Head of caudate nucleus (tissue), 42 donors: ENCODE measurements at regions of chr3 and their contacts with region 1.

Region 1: DNA sequence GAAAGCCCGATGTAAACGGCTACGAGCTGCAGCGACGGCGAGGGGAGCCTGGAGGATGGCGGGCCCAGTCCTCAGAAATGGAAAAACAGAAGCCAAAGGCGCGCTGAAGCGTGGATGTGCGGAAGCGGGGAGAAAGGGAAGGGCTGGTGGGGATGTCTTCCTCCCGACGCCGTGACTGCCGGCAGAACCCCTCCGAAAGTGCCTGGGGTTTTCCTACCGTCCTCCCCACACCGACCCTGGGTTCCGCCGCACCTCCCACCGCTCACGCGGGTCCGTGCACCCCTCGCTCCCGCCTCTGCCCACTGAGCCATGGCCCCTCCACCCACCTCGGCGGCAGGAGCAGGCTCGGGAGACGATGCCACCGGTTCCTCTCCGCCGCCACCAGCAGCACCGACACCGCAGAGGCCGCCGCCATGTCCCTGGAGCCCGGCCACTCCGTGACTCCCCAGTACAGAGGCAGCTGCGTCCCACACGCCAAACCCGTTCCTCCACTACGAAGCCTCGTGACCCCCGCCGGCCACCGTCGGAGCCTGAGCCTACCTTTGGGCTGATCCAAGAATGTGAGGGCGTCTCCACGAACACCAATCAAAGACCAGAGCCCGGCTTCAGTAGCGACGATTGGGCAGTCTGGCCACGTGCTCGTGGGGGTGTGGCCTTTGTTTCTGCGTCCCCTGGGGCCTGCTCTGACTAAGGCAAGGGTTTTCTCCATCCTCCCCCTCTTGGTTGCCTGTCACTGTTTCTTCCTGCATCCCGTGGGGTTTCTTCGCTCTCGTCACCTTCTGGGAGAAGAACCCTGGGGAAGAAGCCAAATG is at the start of gene MCCC1:
- DNase-seq: peak; percentile 97 to 100 (median 99)

Region 2: DNA sequence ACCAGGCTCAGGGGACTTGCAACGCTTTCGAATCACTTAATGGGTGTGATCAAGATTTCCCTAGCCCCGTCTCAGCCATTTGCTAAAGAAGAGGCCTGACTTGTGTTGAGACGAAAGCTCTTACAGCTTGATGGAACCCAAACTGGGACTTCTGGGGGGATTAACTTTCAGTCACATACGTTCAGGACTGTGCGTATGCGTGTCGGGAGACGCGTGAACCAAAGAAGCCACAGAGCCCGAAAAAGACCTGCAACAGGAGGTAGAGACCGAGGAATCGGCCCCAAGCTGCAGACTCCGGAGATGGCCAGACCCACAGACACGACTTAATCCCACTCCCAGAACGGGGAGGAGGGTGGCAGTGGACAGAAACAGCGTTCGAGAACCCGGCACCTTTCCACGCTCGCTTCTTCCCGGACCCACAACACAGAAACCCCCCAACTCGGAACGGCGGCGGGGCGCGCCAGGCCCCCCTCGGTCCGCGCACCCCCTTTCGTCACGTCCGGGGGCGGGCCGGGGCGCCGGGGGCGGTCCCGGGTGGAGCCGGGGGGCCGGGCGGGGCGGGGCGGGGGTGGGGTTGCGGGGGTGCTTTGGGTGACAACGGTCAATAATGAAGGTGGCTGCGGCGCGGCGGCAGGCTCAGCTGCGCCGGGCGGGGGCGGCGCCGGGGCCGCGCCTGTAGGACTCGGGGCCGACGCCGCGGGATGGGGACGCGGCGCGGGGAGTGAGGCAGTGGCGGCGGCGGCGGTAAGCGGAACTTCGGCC is 306.1 kb before region 1 on chr3 and contains the start of gene ATP11B:
- intact Hi-C with region 1: loop called (anchors 5 kb)
- DNase-seq: peak; percentile 34 to 90 (median 78)

Region 3: DNA sequence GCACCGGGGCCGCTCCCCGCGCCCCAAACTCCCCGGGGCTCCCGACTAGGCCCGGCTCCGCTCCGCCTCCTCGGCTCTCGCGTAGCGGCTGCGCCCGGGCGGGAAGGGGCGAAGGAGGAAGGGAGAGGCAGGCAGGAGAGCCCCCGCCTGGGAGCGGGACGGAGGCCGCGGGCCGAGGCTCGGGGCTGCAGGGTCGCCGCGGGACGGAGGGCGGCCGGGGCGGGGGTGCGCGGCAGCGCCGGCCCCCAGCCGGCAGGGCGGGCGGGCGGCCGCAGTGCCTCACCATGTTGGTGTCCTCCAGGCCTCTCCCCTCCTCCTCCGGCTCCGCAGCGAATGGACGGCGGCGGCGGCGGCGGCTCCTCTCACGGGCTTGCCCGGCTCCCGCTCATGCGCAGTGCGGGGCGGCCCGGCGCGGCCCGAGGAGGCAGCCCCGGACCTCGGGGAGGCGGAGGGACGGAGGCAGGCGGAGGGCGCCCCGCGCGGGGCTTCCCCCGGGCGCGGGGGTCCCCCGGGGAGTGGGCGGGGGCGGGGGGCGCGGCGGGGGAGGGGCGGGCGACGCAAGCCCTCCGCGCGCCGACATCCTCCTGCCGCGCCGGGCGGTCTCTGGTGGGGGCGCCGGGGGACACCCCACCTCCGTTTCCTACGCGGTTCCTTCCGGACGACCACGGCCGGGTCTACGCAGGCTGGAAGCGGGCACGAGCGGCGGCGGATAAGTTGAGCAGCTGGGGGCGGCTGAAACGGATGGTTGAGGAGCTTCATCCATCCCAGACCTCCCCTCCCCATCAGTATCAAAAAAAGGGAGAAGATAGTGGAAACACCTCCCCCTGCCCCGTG is 118.8 kb before region 1 on chr3 and contains the start of gene DCUN1D1:
- intact Hi-C with region 1: loop called (anchors 10 kb)
- DNase-seq: peak; percentile 64 to 95 (median 90)